ENCODE measurements at regions of chr4 and their contacts with region 1.

Region 1: DNA sequence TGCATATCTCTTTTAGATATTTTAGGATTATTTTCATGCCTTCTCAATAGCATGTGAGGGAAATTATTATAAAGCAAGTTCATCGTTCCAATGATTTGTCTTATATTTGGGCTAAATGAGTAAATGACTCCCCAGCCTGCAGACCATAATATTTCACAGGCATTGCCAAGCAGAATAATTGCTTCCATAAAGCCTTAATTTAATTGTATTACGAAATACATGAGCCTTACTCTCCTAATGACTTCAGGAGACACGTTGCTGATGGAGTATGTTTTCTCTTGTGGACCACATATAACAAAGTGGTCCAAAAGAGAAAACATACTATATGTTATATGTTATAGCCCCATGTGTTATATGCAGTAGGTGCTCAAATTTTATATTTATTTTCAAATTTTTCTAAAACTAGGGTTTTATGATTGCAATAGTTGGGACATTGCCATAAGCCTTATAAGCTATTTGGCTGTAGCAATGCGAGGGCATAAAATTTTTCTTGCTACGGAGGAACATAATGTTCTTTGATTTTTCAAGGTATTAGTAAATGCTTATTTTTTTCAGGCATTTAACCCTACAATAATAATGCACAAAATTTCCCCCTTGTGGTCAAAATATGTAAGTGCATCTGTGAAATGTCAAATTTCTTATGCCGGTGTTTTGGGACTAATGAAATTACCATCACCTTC is 26.2 kb upstream of the TMPRSS11D start:
- DNase-seq: no peak
- H3K4me3 ChIP-seq: no peak overlapping the region
- H3K27ac ChIP-seq: no peak overlapping the region
- H3K27me3 ChIP-seq: no peaks in the 10 kb centered on the region
- CTCF ChIP-seq: peak; percentile 72

Region 2: GRCh38 chr4:67871867-67872266 is 38.2 kb before region 1 on chr4:
- CTCF ChIA-PET with region 1: interaction called, 67 read pairs
- POLR2A ChIA-PET with region 1: no interaction called
- DNase-seq: no peak
- H3K4me3 ChIP-seq: no peak overlapping the region
- H3K27ac ChIP-seq: no peak overlapping the region
- H3K27me3 ChIP-seq: no peaks in the 10 kb centered on the region
- CTCF ChIP-seq: peak; percentile 63

Region 3: DNA sequence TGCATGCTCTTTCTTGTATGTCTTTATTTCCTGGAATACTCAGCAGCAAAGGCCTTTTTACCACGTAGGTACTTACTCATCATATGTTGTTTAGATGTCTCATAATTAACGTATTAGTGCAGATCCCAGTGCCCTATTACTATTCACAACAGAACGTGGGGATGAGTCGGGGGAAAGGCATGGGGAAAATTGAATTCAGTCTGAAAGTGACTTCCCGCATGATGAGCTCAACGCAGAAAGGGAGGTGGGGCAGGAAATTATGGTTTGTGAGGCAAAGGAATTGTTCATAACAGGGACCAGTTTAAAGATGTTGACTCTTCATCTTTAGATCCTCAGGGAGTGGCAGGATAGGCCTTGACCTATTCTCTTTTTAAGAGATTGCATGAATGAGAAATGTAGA is 24.3 kb before region 1 on chr4:
- CTCF ChIA-PET with region 1: interaction called, 62 read pairs
- POLR2A ChIA-PET with region 1: no interaction called
- DNase-seq: peak; percentile 89
- H3K4me3 ChIP-seq: no peak overlapping the region
- H3K27ac ChIP-seq: peak overlapping the region; percentile 85
- H3K27me3 ChIP-seq: no peaks in the 10 kb centered on the region
- CTCF ChIP-seq: no peak

Region 4: GRCh38 chr4:67892905-67893304 is 17.1 kb before region 1 on chr4:
- CTCF ChIA-PET with region 1: interaction called, 32 read pairs
- POLR2A ChIA-PET with region 1: no interaction called
- DNase-seq: no peak
- H3K4me3 ChIP-seq: no peak overlapping the region
- H3K27ac ChIP-seq: no peak overlapping the region
- H3K27me3 ChIP-seq: no peaks in the 10 kb centered on the region
- CTCF ChIP-seq: peak; percentile 23

Region 5: GRCh38 chr4:67899096-67899495 is 10.9 kb before region 1 on chr4:
- CTCF ChIA-PET with region 1: interaction called, 32 read pairs
- POLR2A ChIA-PET with region 1: no interaction called
- DNase-seq: no peak
- H3K4me3 ChIP-seq: no peak overlapping the region
- H3K27ac ChIP-seq: no peak overlapping the region
- H3K27me3 ChIP-seq: no peaks in the 10 kb centered on the region
- CTCF ChIP-seq: no peak

Region 6: DNA sequence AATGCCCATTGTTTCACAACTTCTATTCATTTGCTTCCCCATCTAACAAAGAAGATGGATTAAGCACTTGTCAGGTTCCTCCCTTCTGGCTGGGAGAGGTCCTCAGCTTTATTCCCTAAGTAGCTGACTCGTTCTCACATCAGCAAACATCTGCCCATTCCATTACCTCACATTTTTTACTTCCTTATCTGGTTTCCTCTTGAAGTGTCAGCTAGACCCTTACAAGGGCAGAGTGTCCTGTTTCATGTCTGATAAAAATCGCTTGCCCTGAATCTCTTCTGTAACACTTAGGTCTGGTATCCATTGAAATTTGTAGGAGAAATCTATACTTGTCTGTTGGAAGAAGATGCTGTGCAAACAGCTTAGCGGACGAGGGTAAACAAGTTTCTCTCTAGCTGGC is 18.5 kb after region 1 on chr4:
- CTCF ChIA-PET with region 1: interaction called, 13 read pairs
- POLR2A ChIA-PET with region 1: no interaction called
- DNase-seq: no peak
- H3K4me3 ChIP-seq: no peak overlapping the region
- H3K27ac ChIP-seq: no peak overlapping the region
- H3K27me3 ChIP-seq: no peaks in the 10 kb centered on the region
- CTCF ChIP-seq: no peak

Measured in AG04450 (cell line).